ENCODE measurements at regions of chr16 and their contacts with region 1.

Region 1: GRCh38 chr16:11535471-11535870 is 51.2 kb downstream of the LITAF start:
- DNase-seq: no peak
- H3K4me3 Mint-ChIP-seq: no peak overlapping the region
- H3K27ac Mint-ChIP-seq: no peak overlapping the region
- H3K4me1 Mint-ChIP-seq: peaks cover 3% of the 10 kb centered on the region
- H3K27me3 Mint-ChIP-seq: peaks cover 6% of the 10 kb centered on the region

Region 2: DNA sequence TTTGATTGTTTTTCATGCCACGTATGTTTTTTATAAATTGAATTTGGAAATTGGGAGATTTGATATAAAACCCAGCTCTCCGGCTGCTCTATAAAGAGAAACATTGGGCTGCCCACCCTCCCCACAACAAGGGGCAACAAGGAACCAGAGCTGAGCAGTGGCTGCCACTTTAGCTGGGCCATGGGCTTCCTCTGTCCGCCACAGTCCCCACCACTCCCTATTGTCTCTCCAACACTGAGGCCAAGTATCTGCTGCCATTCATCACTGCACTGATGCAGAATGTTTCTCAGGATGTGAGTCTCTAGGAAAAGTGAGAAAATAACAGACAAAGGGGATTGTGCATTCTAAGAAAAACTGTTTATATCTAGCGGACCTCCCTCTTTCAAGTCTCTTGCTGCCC is 55.6 kb before region 1 on chr16:
- CTCF ChIA-PET with region 1: no interaction called
- POLR2A ChIA-PET with region 1: no interaction called
- DNase-seq: no peak
- H3K4me3 Mint-ChIP-seq: no peak overlapping the region
- H3K27ac Mint-ChIP-seq: no peak overlapping the region
- H3K4me1 Mint-ChIP-seq: no peaks in the 10 kb centered on the region
- H3K27me3 Mint-ChIP-seq: peaks cover 2% of the 10 kb centered on the region

Region 3: DNA sequence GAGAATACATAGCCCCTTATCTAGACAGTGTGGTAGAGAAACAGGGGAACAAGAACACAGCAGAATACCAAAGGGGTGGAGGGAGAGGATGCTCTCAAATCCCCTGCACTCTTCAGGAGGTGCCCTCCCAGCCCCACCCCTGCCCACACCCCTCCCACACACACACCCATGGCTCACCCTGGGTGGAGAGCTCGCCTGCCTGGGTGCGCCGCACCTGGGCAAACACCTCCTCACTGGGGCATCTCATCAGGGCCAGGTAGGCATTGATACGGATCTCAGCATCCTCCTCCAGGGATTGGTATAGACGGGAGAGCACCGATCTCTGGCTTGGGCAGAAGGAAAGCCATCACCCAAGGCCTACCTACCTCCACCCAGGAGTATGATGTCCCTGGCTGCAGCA is 43.9 kb before region 1 on chr16:
- CTCF ChIA-PET with region 1: no interaction called
- POLR2A ChIA-PET with region 1: no interaction called
- DNase-seq: no peak
- H3K4me3 Mint-ChIP-seq: no peak overlapping the region
- H3K27ac Mint-ChIP-seq: no peak overlapping the region
- H3K4me1 Mint-ChIP-seq: peaks cover 16% of the 10 kb centered on the region
- H3K27me3 Mint-ChIP-seq: no peaks in the 10 kb centered on the region

Region 4: DNA sequence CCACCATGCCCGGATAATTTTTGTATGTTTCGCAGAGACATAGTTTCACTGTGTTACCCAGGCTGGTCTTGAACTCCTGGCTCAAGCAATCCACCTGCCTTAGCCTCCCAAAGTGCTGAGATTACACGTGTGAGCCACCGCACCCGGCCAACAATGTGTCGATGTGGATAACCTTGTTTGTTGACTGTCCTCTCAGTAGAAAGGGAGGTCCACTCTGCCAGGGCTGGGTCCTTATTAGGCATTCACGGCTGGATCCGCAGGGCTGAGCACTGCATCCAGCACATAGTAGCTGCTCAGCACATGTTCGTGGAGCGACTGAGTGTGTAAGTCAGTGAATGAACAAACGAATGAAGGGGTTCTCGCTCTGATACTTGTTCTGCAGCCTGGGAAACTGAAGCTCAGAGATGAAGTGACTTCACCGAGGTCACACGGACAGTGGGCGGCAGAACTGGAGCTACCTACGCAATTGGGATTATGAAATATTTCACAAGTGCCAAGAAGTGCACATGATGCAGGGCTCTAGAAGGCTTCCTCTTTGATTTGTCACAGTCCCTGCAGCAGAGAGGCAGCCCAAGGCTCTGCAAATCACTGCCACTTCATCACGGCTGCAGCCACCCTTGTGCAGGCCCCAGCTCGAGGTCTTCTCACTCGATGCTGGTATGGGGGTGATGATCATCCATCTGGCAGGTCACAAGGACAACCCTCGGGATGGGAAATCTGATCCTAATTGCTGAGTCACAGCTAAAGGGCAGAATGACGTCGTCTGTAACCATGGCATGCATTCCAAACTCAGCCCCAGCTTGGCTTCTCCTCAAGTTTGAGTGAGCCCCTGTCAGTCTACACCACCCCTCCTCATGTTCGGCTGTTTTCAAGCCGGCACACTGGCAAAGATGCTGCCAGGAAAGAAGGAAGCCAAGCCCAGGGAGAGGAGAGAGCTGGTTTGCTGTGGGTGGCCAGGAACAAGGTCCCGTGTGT is 104.7 kb after region 1 on chr16:
- CTCF ChIA-PET with region 1: interaction called, 24 read pairs
- POLR2A ChIA-PET with region 1: no interaction called
- DNase-seq: no peak
- H3K4me3 Mint-ChIP-seq: no peak overlapping the region
- H3K27ac Mint-ChIP-seq: no peak overlapping the region
- H3K4me1 Mint-ChIP-seq: peaks cover 2% of the 10 kb centered on the region
- H3K27me3 Mint-ChIP-seq: peaks cover 30% of the 10 kb centered on the region

Region 5: GRCh38 chr16:11651796-11652195 is 116.3 kb after region 1 on chr16:
- CTCF ChIA-PET with region 1: interaction called, 10 read pairs
- POLR2A ChIA-PET with region 1: no interaction called
- DNase-seq: no peak
- H3K4me3 Mint-ChIP-seq: no peak overlapping the region
- H3K27ac Mint-ChIP-seq: no peak overlapping the region
- H3K4me1 Mint-ChIP-seq: peaks cover 13% of the 10 kb centered on the region
- H3K27me3 Mint-ChIP-seq: peaks cover 26% of the 10 kb centered on the region

Measured in activated CD4-positive, alpha-beta memory T cell treated with anti-CD3 and anti-CD28 coated beads, Interleukin-2, amount 10 ng/mL, durations not matched to agents 7 days and 5 days (primary cell).